ENCODE measurements at regions of chr12 and their contacts with region 1.

Region 1: DNA sequence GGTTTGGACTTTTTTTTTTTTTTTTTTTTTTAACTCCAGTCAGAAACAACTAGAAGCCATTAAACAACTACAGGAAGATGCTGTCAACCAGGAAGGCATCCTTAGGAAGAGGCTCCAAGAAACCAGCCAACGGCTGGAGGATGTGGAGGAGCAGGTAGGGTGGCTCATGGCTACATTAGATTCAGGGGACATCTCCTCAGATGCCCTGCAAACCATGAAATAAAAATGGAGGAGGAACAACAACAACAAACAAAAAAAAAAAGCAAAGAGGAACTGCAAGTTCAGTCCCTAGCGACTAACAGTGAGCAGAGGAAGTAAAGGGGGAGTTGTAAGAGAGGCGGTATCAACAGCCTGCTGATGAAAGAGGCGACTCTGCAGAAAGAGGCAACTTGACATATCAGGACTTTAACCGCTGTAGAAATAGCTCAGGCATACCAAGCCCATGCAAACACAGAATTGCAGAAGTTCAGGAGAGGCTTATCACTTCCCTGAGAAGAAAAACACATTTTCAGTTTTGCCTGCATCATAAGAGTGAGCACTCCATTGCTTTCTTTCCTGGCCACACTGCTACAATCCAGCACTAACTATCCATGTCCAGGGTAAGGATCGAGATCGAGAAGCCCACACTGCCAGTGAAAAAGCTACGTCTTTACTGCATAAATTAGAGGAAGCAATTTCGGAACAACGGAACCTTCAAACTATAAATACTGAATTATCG is 103.5 kb upstream of the BCAT1 start:
- DNase-seq: peak; percentile 87
- H3K4me3 Mint-ChIP-seq: peak overlapping the region; percentile 93
- H3K27ac Mint-ChIP-seq: peak overlapping the region; percentile 99
- H3K4me1 Mint-ChIP-seq: peaks cover 45% of the 10 kb centered on the region
- H3K27me3 Mint-ChIP-seq: peaks cover 3% of the 10 kb centered on the region

Region 2: DNA sequence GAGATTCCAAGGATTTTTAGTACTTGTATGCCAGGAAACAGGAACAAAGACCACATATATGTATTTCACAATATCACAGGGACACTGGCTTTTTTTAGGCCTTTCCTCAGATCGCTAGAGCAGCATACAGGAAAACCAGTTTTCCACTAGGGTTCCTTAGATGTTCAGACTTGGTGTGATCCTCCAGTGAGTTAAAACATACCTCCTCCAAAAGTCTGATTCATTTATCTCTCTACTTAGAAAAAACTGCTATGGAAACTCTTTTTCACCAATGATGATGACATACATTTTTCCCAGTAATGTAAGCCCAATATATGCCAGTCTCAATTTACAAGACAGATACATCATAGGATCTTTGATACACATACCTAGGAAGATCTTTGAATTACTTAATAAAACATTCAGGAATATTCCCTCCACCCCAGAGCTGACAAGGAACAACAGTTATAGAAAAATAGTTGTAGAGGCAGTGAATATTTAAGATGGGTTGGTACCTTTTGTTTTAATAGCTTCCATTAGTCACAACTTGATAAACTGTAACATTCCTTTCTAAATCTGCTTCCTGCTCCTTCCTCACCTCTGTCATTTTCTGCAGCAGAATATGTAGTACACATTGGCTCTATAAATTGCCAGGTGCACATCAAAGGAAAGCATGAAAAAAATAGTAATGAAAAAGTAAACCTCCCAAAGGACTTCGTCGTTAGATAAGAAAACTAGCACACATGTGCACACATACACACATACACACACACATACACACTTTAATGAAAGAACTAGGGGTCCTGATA is 130.9 kb before region 1 on chr12:
- intact Hi-C with region 1: loop called (anchors 5 kb)
- DNase-seq: no peak
- H3K4me3 Mint-ChIP-seq: peak overlapping the region; percentile 49
- H3K27ac Mint-ChIP-seq: peak overlapping the region; percentile 81
- H3K4me1 Mint-ChIP-seq: peaks cover 36% of the 10 kb centered on the region
- H3K27me3 Mint-ChIP-seq: peaks cover 7% of the 10 kb centered on the region

Region 3: GRCh38 chr12:25063873-25064628 is 11.7 kb after region 1 on chr12:
- intact Hi-C with region 1: loop called (anchors 1 kb)
- DNase-seq: no peak
- H3K4me3 Mint-ChIP-seq: no peak overlapping the region
- H3K27ac Mint-ChIP-seq: peak overlapping the region; percentile 2
- H3K4me1 Mint-ChIP-seq: peaks cover 41% of the 10 kb centered on the region
- H3K27me3 Mint-ChIP-seq: no peaks in the 10 kb centered on the region

Region 4: GRCh38 chr12:25121916-25122315 is 69.6 kb after region 1 on chr12:
- intact Hi-C with region 1: loop called (anchors 5 kb)
- DNase-seq: no peak
- H3K4me3 Mint-ChIP-seq: no peak overlapping the region
- H3K27ac Mint-ChIP-seq: no peak overlapping the region
- H3K4me1 Mint-ChIP-seq: no peaks in the 10 kb centered on the region
- H3K27me3 Mint-ChIP-seq: peaks cover 1% of the 10 kb centered on the region

Region 5: DNA sequence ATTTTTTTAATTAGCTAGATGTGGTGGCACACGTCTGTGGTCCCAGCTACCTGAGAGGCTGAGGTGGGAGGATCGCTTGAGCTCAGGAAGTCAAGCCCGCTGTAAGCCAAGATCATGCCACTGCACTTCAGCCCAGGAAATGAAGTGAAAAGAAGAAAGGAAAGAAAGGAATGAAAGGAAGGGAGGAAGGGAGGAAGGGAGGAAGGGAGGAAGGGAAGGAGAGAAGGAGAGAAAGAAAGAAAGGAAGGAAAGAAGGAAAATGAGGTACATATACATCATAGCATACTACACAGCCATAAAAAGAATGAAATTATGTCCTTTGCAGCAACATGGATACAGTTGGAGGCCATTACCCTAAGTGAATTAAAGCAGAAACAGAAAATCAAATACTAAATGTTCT is 130.4 kb after region 1 on chr12:
- intact Hi-C with region 1: no loop called
- DNase-seq: no peak
- H3K4me3 Mint-ChIP-seq: no peak overlapping the region
- H3K27ac Mint-ChIP-seq: no peak overlapping the region
- H3K4me1 Mint-ChIP-seq: peaks cover 17% of the 10 kb centered on the region
- H3K27me3 Mint-ChIP-seq: peaks cover 4% of the 10 kb centered on the region

Region 6: GRCh38 chr12:25320123-25321006 is 268.0 kb after region 1 on chr12:
- intact Hi-C with region 1: loop called (anchors 5 kb)
- DNase-seq: peak; percentile 61
- H3K4me3 Mint-ChIP-seq: peak overlapping the region; percentile 43
- H3K27ac Mint-ChIP-seq: peak overlapping the region; percentile 80
- H3K4me1 Mint-ChIP-seq: peaks cover 47% of the 10 kb centered on the region
- H3K27me3 Mint-ChIP-seq: peaks cover 13% of the 10 kb centered on the region

Measured in activated CD4-positive, alpha-beta T cell treated with anti-CD3 and anti-CD28 coated beads, Interleukin-2, amount 10 ng/mL, durations not matched to agents 24 days and 14 days (primary cell).